ENCODE measurements at regions of chr10 and their contacts with region 1.

Region 1: GRCh38 chr10:112307358-112308124 is 24.3 kb downstream of the TECTB start:
- DNase-seq: no peak
- H3K4me3 ChIP-seq: no peak overlapping the region
- H3K27me3 ChIP-seq: peaks cover 1% of the 10 kb centered on the region
- CTCF ChIP-seq: peak; percentile 92

Region 2: DNA sequence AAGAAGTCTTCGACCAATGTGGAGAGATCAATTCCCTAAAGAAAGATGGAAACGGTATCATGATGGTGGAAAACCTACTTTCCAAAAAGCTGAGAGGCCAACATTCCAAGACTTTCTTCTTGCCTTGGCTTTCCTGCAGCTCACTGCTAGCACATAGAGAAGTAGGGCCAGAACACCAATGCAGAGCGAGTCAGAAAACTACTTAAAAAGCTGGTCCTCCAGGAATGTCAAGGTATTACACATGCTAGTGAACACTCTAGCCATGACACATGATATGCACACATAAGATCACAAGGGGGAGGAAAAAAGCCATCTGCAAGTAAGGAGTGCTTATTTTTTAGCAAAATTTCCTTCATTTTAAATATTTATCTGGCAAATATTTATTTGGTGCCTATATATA is 146.7 kb before region 1 on chr10:
- CTCF ChIA-PET with region 1: interaction called, 15 read pairs
- POLR2A ChIA-PET with region 1: no interaction called
- DNase-seq: no peak
- H3K4me3 ChIP-seq: no peak overlapping the region
- H3K27me3 ChIP-seq: no peaks in the 10 kb centered on the region
- CTCF ChIP-seq: no peak

Region 3: GRCh38 chr10:112173206-112173605 is 134.3 kb before region 1 on chr10:
- CTCF ChIA-PET with region 1: interaction called, 37 read pairs
- POLR2A ChIA-PET with region 1: no interaction called
- DNase-seq: no peak
- H3K4me3 ChIP-seq: no peak overlapping the region
- H3K27me3 ChIP-seq: no peaks in the 10 kb centered on the region
- CTCF ChIP-seq: no peak

Region 4: DNA sequence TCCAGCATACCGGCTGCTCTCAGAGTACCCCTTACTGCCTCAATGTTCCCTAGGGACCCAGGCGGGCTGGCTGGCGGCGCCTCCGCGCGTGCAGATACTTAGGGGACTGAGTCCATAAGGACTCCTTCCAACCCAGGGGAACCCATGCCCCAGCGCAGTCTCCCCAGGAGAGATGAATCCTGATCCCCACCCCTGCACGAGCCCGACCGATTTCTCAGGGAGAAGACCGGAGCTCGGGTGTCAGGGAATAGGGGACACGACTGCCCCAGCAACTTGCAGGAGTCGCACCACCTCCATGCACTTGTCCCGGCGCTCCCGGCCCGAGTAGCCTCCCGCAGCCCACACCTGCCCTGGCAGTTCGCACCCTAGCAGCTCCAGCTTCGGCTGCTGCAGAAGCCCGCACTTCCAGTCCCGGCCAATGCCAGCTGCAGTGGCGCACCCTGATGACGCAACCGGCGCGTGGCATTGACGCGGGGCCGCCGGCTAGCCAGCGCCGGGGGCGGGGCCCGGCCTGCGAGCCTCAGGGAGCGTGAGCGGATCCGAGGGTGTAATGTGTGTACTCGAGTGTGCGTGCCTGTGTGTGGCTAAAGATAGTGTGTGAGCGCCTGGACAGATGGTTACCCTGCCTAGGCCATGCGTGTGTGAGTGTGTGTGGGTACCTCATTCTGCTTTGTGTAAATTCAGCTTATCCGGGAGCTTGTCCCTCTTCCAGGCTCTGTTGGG is 124.1 kb before region 1 on chr10 and contains the start of gene GPAM:
- CTCF ChIA-PET with region 1: interaction called, 26 read pairs
- POLR2A ChIA-PET with region 1: no interaction called
- DNase-seq: peak; percentile 50
- H3K4me3 ChIP-seq: peak within 1 kb of the TSS; percentile 96
- H3K27me3 ChIP-seq: no peaks in the 10 kb centered on the region
- CTCF ChIP-seq: no peak
- polyA plus RNA-seq, gene GPAM: 4.5 and 7.9 TPM in 2 replicates

Region 5: DNA sequence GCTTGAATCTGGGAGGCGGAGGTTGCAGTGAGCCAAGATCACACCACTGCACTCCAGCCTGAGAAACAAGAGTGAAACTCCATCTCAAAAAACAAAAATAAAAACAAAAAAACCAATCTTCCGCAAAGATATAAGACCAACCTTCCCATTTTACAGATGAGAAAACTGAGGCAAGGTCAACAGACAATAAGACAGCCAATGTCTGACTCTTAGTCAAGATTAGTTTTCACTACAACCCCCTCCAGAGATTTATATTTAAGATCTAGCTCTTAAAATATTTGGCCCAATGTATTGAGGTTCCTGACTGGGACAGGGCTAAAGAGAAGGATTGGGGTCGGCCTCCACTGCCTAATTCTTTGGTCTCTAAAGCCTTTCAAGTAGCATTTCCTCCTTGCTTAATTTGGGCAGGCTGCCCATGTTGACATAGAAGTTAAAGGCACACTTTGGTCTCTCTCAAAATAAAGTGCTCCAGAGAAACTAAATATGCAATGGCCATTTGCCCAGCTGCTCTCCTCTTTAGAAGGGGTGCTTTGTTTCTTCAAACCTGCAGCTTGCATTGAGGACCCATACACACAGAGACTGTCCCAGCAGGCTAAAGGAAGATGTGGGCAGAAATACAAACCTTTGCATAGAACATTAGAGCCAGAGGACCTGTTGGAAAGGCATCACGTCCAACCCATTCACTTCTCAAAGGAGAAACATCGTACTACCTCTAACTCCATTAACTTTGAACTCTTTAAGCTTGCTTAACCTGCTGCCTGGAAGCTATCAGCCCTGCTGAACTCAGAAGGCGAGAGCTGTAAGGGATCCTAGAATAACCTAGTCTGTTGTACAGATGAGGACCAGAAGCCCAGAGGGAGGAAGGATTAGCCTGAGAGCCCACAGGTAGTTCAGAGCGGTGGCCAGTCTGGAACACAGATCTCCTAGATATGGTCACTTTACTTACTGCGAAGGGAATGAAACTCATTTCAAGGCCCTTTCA is 20.4 kb before region 1 on chr10:
- CTCF ChIA-PET with region 1: no interaction called
- POLR2A ChIA-PET with region 1: no interaction called
- DNase-seq: no peak
- H3K4me3 ChIP-seq: no peak overlapping the region
- H3K27me3 ChIP-seq: no peaks in the 10 kb centered on the region
- CTCF ChIP-seq: no peak

Region 6: DNA sequence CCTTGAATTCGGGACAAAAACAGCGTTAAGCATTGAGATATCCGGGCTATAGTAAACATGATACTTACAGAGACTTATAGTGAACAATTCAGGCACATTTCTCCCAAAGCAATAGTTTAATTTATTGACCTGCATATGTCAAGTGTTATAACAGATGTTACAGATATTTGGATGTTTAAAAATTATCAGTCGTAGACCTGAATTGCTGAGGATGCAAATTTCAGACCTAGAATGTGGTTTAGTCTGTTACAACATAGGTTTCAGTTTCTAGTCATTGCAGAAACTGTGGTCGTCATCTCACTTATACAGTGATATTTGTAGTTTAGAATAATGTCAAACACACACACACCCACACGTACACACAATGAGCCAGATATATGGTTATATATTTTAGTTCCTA is 224.6 kb after region 1 on chr10:
- CTCF ChIA-PET with region 1: no interaction called
- POLR2A ChIA-PET with region 1: no interaction called
- DNase-seq: no peak
- H3K4me3 ChIP-seq: no peak overlapping the region
- H3K27me3 ChIP-seq: no peaks in the 10 kb centered on the region
- CTCF ChIP-seq: no peak